Mammary epithelial cell (primary cell): ENCODE measurements at regions of chr4 and their contacts with region 1.

Region 1: DNA sequence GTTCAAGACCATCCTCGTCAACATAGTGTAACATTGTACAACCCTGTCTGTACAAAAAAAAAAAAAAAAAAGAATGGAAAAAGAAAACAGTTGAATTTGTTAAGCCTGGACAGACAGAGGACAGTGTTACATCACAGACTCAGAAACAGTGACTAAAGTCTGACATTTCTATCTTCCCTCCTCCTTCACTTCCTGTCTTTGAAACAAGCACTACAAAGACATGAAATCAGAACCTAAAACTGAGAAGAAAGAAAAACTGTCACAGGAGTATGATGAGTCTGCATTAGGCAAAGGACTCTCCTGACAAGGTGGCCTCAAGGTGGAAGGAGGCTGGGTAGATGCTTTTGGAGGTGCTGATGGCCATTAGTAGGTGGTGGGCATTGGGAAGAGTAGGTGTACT is 126.7 kb downstream of the RBM47 start:
- DNase-seq: no peak
- H3K4me3 ChIP-seq: no peak overlapping the region
- H3K27ac ChIP-seq: no peak overlapping the region
- H3K4me1 ChIP-seq: peaks cover 14% of the 10 kb centered on the region
- H3K27me3 ChIP-seq: no peaks in the 10 kb centered on the region
- CTCF ChIP-seq: no peak

Region 2: GRCh38 chr4:40395908-40396793 is 106.8 kb before region 1 on chr4:
- CTCF ChIA-PET with region 1: no interaction called
- dilution Hi-C with region 1: loop called (anchors 5 kb)
- in situ Hi-C with region 1: no loop called
- intact Hi-C with region 1: no loop called
- DNase-seq: peak; percentile 35
- H3K4me3 ChIP-seq: no peak overlapping the region
- H3K27ac ChIP-seq: no peak overlapping the region
- H3K4me1 ChIP-seq: no peaks in the 10 kb centered on the region
- H3K27me3 ChIP-seq: no peaks in the 10 kb centered on the region
- CTCF ChIP-seq: no peak

Region 3: GRCh38 chr4:40564004-40564403 is 61.1 kb after region 1 on chr4:
- CTCF ChIA-PET with region 1: no interaction called
- dilution Hi-C with region 1: loop called (anchors 10 kb)
- in situ Hi-C with region 1: no loop called
- intact Hi-C with region 1: no loop called
- DNase-seq: peak; percentile 47
- H3K4me3 ChIP-seq: no peak overlapping the region
- H3K27ac ChIP-seq: no peak overlapping the region
- H3K4me1 ChIP-seq: peaks cover 3% of the 10 kb centered on the region
- H3K27me3 ChIP-seq: no peaks in the 10 kb centered on the region
- CTCF ChIP-seq: no peak